K562 (cell line): ENCODE measurements at regions of chr4 and their contacts with region 1.

Region 1: DNA sequence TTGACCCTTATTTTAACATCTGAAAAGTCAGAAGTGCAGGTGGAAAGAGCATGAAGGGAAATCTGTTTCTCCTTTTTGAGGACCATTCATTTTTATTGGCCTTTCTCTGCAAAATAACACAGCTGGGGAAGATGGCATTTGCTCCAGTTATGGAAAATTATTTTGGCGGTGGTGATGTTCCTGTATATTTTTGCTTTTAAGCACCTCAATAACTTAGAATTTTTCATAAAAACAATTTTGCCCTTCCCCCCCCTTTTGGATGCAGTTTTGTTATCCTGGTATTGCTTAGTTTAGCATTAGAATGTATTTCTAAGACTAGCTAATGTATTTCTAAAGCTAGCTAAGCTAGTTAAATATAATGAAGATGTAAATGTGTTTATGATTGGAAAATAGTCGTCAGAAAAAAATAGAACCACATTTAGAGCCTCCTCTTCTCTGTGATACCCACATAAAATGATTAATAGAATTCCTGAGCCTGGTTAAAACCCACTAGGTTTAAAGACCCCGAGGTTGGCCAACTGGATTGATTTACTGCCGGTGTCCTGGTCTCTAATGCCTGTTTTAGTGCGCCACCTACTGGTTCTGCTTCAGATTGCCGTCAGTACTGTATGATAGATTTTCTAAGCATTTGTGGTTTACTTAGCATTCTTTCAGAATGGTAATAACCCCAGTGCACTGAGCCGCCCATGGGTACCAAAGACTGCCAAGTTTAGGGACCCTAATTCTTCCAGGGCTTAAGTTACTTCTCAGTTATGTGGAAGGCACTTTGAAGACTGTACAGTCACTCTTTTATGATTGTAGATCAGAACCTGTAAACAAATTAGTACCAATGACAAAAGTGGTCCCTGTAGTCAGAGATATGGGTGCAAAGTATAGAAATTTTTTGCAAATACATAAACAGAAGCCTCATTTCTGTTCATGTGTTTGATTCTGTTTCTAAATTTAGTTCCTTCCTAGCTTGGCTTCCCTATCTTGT is 11.4 kb downstream of the KLF3 start:
- DNase-seq: peak; percentile 45 to 90 (median 61)
- ATAC-seq: peak; percentile 45
- H3K4me3 ChIP-seq: peak overlapping the region; percentile 19; the same call in 1 of the 2 replicates
- H3K27ac ChIP-seq: peak overlapping the region; percentile 80; the same call in 2 of the 3 replicates
- H3K4me1 ChIP-seq: peaks cover 35 to 49% of the 10 kb centered on the region in 2 experiments
- H3K27me3 ChIP-seq: no peaks in the 10 kb centered on the region
- CTCF ChIP-seq: peak; percentile 72 to 92 (median 86)
- EP300 ChIP-seq: peak; percentile 18; the same call in 1 of the 2 replicates
- POLR2A ChIP-seq: no peak
- RAD21 ChIP-seq: peak; percentile 92 to 96

Region 2: GRCh38 chr4:38062088-38062893 is 613.1 kb before region 1 on chr4:
- CTCF ChIA-PET with region 1: interaction called, 10 read pairs
- POLR2A ChIA-PET with region 1: no interaction called
- in situ Hi-C with region 1: no loop called
- intact Hi-C with region 1: no loop called
- DNase-seq: peak; percentile 62 to 86 (median 66)
- ATAC-seq: peak; percentile 92
- H3K4me3 ChIP-seq: no peak overlapping the region
- H3K27ac ChIP-seq: no peak overlapping the region
- H3K4me1 ChIP-seq: peaks cover 4 to 10% of the 10 kb centered on the region in 2 experiments; a peak in 2 of 5 replicates
- H3K27me3 ChIP-seq: peaks cover 4 to 8% of the 10 kb centered on the region in 2 experiments; a peak in 3 of 5 replicates
- CTCF ChIP-seq: peak; percentile 67 to 83 (median 83)
- EP300 ChIP-seq: no peak
- POLR2A ChIP-seq: no peak
- RAD21 ChIP-seq: peak; percentile 71 to 72

Region 3: GRCh38 chr4:38179690-38180377 is 495.6 kb before region 1 on chr4:
- CTCF ChIA-PET with region 1: interaction called, 16 read pairs
- POLR2A ChIA-PET with region 1: interaction called, 5 read pairs
- in situ Hi-C with region 1: loop called (anchors 5 kb)
- intact Hi-C with region 1: loop called (anchors 1 kb)
- DNase-seq: peak; percentile 60 to 76 (median 72)
- ATAC-seq: peak; percentile 83
- H3K4me3 ChIP-seq: no peak overlapping the region
- H3K27ac ChIP-seq: no peak overlapping the region
- H3K4me1 ChIP-seq: peaks cover 4 to 15% of the 10 kb centered on the region in 2 experiments
- H3K27me3 ChIP-seq: no peaks in the 10 kb centered on the region; a peak in 1 of 5 replicates
- CTCF ChIP-seq: peak; percentile 82 to 90 (median 88)
- EP300 ChIP-seq: no peak
- POLR2A ChIP-seq: no peak
- RAD21 ChIP-seq: peak; percentile 97 to 98

Region 4: DNA sequence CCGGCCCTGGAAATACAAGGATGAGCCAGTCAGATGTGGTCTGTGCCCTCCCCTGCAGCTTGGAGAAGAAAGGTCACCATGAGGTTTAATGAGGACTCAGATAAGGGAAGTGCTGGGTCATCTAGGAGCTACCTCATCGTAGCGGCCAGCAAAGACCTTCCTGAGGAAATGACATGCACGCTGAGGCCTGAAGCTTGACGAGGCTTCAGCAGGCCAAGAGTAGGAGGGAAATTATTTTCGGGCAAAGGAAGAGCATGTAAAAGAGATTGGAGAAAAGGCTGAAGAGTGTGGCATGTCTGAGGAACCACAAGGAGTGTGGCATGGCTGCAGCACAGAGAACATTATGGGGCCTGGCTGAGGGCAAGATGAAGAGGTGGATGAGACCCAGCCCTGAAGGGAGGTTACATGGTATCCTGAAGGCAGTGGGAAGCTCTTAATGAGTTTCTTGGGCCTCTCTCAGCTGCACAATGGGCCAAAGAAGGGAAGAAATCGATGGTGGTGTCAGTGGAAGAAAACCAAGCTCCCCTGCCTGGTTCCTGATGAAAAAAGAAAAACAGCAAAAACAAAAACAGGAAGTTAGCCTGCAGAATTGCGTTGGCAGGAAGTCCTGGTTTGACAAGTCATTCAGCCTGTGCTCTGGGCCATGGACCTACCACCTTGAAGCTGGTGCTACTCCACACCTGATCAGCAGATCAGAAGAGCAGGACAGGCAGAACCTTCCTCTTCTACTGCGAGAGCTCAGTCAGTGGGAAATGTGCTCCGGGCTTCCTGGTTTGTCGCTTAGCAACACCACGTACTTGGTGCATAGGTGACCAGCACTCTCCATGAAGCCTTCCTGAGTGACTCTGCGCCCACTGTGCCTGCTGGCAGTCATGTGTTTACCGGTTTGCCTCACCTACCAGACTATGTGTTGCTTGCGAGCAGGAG is 146.0 kb before region 1 on chr4:
- CTCF ChIA-PET with region 1: no interaction called
- POLR2A ChIA-PET with region 1: interaction called, 7 read pairs
- in situ Hi-C with region 1: no loop called
- intact Hi-C with region 1: loop called (anchors 2 kb)
- DNase-seq: peak; percentile 83 to 95 (median 88)
- ATAC-seq: peak; percentile 95
- H3K4me3 ChIP-seq: no peak overlapping the region
- H3K27ac ChIP-seq: peak overlapping the region; percentile 98
- H3K4me1 ChIP-seq: peaks cover 22 to 34% of the 10 kb centered on the region in 2 experiments
- H3K27me3 ChIP-seq: no peaks in the 10 kb centered on the region
- CTCF ChIP-seq: peak in 1 of 3 experiments; percentile 14; a peak in 1 of 6 replicates
- EP300 ChIP-seq: peak; percentile 91
- POLR2A ChIP-seq: peak; percentile 71
- RAD21 ChIP-seq: peak; percentile 36 to 45

Region 5: DNA sequence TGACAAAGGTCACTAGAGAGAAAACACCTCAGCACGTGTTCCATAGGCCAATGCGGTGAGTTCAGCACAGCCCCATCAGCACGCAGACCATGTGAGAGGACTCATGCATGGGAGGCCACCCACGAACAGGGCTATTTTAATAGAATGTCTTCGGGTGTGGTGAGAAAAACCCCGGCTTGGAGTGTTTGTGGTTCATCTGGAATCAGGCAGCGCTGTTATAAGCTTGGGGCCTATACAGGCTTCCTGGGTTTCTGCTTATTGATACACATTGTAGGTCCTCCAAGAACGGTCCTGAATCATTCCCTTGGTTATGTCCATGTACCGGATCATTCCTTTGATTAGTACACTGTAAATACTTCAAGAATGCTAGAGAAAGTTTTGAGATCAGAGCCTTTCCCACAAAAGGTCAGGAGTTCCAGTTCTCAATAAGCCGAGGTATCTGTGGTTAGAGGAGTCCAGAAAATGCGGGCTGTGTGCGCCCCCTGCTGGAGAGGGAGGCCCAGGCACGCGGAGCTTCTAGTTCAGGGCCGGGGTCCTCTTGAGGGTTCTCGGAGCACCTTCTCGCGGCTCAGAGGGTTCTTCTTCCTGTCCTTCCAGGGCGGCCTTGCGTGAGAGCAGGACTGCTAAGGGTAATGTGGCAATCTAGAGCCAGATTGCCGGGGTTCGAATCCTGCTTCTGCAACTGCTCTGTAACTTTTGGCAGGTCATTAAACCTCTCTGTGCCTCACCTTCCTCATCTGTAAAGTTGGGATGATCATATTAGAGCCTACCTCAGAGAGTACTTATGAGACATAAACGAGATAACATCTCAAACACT is 55.6 kb after region 1 on chr4:
- CTCF ChIA-PET with region 1: interaction called, 5 read pairs
- POLR2A ChIA-PET with region 1: interaction called, 3 read pairs
- in situ Hi-C with region 1: loop called (anchors 5 kb)
- intact Hi-C with region 1: loop called (anchors 5 kb)
- DNase-seq: peak; percentile 75 to 87 (median 84)
- ATAC-seq: peak; percentile 98
- H3K4me3 ChIP-seq: no peak overlapping the region
- H3K27ac ChIP-seq: no peak overlapping the region
- H3K4me1 ChIP-seq: peaks cover 0 to 2% of the 10 kb centered on the region in 2 experiments; a peak in 3 of 5 replicates
- H3K27me3 ChIP-seq: no peaks in the 10 kb centered on the region
- CTCF ChIP-seq: peak; percentile 86 to 96 (median 88)
- EP300 ChIP-seq: no peak
- POLR2A ChIP-seq: no peak
- RAD21 ChIP-seq: peak; percentile 95 to 98